Naive thymus-derived CD4-positive, alpha-beta T cell (primary cell): ENCODE measurements at regions of chr1 and their contacts with region 1.

Region 1: DNA sequence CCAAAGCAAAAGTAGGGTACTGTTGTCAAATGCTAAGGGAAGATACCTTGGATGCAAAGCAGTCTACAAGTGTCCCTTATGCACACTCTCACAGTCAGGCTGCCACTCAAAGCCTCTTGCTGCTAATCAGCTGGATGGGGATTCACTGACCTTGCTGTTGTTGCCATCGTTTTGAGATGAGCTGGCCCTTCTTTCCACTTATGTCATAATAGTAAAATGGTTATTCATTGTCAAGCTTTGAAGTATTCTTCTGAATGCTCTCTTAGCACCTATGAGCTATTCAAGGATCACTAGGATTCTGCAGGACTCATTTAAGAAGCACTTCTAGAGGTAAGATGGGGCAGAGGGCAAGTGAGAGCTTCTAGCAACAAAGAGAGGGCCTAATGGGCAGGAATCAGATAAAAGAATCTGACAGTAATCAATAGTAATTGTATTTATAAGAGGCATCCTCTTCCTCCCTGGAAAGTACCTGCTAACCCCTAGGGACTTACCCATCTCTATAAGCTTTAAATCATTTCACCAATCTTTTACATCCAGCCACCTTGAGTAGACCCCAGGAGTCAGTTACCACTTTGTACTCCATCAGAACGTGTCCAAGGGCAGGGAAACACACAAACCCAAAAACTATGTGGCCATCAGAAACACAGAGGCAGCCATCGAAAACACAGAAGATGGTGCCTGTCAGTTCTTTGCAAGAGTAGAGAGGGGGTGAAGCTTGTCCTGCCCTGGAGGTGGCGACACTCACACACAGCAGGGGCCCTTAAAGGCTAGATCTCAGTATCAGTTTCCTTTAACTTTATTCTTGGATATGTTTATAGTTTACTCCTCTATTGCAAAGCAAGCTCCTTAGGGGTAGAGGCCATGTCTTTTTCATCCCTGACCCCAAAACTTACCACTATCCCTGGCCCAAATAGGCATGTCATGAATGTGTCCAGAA is 103.7 kb upstream of the NFIA start:
- DNase-seq: peak in 6 of 9 donors; percentile 9 to 45 (median 28)
- ATAC-seq: peak; percentile 53
- H3K4me3 ChIP-seq: no peak overlapping the region
- H3K4me3 Mint-ChIP-seq: no peak overlapping the region
- H3K27ac ChIP-seq: no peak overlapping the region
- H3K27ac Mint-ChIP-seq: no peak overlapping the region
- H3K4me1 ChIP-seq: no peaks in the 10 kb centered on the region
- H3K4me1 Mint-ChIP-seq: peaks cover 0 to under 1% (median 0%) of the 10 kb centered on the region in 7 donors
- H3K27me3 ChIP-seq: peaks cover 0 to 3% of the 10 kb centered on the region in 2 donors
- H3K27me3 Mint-ChIP-seq: peaks cover 0 to 9% (median 1%) of the 10 kb centered on the region in 5 donors

Region 2: DNA sequence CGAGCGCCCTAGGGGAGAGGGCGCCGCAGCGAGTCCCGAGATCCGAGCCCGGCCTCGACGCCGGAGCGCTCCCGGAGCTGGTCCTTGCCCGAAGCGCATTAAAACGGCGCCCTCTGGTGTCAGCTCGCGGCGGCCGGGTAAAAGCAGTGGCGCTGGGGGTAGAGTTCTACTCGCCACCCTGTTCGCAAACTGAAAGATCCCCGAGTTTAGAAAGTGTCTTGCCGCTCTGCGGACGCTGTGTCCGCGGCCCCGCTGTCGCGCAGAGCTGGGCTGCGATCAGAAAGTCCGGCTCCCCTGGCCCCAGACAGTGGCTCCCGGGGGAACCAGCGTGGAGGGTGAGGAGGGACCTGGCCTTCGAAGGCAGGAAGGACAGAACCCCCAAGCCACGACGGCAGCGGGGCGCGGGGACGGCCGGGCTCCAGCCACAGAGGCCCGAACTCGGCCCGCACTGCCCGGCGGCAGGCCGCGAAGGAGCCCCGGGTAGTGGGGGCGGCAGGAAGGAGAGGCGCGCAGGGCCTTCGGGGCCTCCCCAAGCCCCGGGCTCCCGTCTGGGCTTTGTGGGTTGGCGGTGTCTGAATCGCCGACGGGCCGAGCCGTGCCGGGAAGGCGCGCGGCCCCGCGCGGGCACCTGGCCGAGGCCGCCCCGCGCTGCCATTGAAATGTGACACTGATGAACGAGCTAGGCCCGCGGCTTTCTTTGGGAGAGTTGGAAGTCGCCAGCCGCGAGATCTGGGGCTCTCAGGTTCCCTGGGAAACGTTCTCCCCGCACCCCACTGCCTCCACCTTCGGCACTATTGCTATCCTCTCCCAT is 64.5 kb after region 1 on chr1:
- CTCF ChIA-PET with region 1: no interaction called
- POLR2A ChIA-PET with region 1: no interaction called
- intact Hi-C with region 1: loop called (anchors 1 to 2 kb)
- DNase-seq: peak; percentile 62 to 83 (median 78)
- ATAC-seq: peak; percentile 96
- H3K4me3 ChIP-seq: peak overlapping the region; percentile 35
- H3K4me3 Mint-ChIP-seq: peak overlapping the region; percentile 53 to 88 (median 73)
- H3K27ac ChIP-seq: no peak overlapping the region
- H3K27ac Mint-ChIP-seq: no peak overlapping the region
- H3K4me1 ChIP-seq: peaks cover 3 to 4% of the 10 kb centered on the region in 2 donors
- H3K4me1 Mint-ChIP-seq: peaks cover 0 to 4% (median 0%) of the 10 kb centered on the region in 7 donors
- H3K27me3 ChIP-seq: peaks cover 0 to 8% of the 10 kb centered on the region in 2 donors
- H3K27me3 Mint-ChIP-seq: peaks cover 28 to 67% (median 38%) of the 10 kb centered on the region in 5 donors

Region 3: DNA sequence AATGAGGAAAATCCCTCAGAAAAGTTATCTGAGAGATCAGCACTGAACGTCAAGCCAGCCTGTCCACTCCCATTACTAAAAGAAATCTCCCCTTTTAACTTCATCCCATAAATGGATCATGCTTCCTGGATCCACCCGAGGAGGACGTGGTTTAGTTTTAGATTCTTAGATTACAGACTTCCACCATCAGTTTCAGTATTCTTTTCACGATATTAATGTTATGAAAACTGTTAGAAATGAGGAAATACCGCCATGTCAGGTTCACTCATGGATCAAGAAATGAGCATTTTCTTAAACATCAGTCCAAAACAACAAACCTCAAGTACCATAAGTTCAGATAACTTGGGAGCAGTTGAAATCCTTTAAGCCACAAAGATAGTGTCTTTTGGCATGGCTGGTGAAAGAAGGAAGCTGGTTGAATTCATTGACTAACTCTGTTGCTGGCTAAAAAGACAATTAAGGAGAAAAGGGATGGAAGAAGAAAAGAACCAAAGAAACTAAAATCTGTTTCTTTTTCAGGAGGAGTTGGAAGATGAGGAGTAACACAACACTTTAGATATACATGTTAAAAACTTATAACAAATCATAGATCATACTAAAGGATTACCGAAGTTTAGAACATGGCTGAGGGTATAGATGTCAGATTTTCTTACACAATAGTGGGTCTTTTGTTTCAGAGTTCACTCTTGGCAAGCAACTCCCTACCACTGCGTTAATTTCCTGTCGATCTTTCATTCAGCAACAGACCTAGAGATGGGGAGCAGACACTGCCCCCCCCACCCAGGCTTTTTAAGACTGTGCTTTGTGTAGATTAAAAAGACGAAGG is 153.7 kb after region 1 on chr1:
- CTCF ChIA-PET with region 1: no interaction called
- POLR2A ChIA-PET with region 1: no interaction called
- intact Hi-C with region 1: no loop called
- DNase-seq: no peak
- ATAC-seq: no peak
- H3K4me3 ChIP-seq: no peak overlapping the region
- H3K4me3 Mint-ChIP-seq: no peak overlapping the region
- H3K27ac ChIP-seq: no peak overlapping the region
- H3K27ac Mint-ChIP-seq: no peak overlapping the region
- H3K4me1 ChIP-seq: no peaks in the 10 kb centered on the region
- H3K4me1 Mint-ChIP-seq: peaks cover 2 to 9% (median 6%) of the 10 kb centered on the region in 7 donors
- H3K27me3 ChIP-seq: no peaks in the 10 kb centered on the region
- H3K27me3 Mint-ChIP-seq: peaks cover 5 to 21% (median 8%) of the 10 kb centered on the region in 5 donors

Region 4: DNA sequence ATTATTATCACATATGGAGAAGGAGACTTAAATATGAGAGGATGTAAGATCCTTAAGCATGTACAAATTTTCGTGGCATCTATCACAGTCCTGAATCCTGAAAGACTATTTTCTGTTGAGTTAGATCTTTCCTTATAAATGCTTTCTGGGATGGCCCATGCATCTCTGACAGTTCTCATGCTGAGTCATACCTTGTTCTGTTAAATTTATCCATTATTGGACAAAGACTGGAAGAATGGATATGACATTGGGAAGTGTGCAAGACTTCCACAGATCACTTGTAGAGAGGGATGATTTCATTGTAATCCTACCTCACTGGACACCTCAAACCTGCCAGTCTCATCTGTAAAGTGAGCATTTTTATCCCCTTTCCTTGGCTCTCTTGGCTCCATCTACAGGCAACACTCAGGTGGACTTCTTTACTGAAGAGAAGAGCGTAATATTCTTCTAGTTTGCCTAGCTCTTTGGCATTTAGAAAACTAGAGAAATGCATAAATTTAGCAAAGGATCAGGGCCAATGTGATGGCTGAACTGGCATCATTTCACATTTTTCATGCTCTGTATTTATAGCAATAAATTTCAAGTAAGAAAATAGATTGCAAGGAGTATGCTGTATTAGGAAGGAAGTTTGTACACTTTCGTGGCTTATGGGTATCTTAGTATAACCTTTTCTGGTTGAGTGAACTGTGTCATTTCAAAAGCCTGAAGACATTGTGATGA is 231.9 kb after region 1 on chr1:
- CTCF ChIA-PET with region 1: no interaction called
- POLR2A ChIA-PET with region 1: no interaction called
- intact Hi-C with region 1: loop called in 1 of 2 experiments (anchors 1 kb)
- DNase-seq: peak in 5 of 9 donors; percentile 4 to 30 (median 13)
- ATAC-seq: no peak
- H3K4me3 ChIP-seq: no peak overlapping the region
- H3K4me3 Mint-ChIP-seq: no peak overlapping the region
- H3K27ac ChIP-seq: no peak overlapping the region
- H3K27ac Mint-ChIP-seq: no peak overlapping the region
- H3K4me1 ChIP-seq: no peaks in the 10 kb centered on the region
- H3K4me1 Mint-ChIP-seq: no peaks in the 10 kb centered on the region
- H3K27me3 ChIP-seq: no peaks in the 10 kb centered on the region
- H3K27me3 Mint-ChIP-seq: peaks cover 0 to 21% (median 0%) of the 10 kb centered on the region in 5 donors